Ascending aorta (tissue), 2 donors: ENCODE measurements at regions of chr5 and their contacts with region 1.

Region 1: GRCh38 chr5:173472141-173472543 is 143.9 kb upstream of the STC2 start:
- DNase-seq: peak; percentile 62 to 91
- H3K4me3 ChIP-seq: no peak overlapping the region
- H3K27ac ChIP-seq: peak overlapping the region; percentile 84 to 87
- H3K4me1 ChIP-seq: peaks cover 8 to 15% of the 10 kb centered on the region in 2 donors
- H3K27me3 ChIP-seq: no peaks in the 10 kb centered on the region
- CTCF ChIP-seq: no peak

Region 2: GRCh38 chr5:173315495-173316350 is 156.4 kb before region 1 on chr5:
- intact Hi-C with region 1: loop called (anchors 10 kb)
- DNase-seq: peak in 1 of 2 donors; percentile 70
- H3K4me3 ChIP-seq: peak overlapping the region in 1 of 2 donors; percentile 42
- H3K27ac ChIP-seq: no peak overlapping the region
- H3K4me1 ChIP-seq: peaks cover 4 to 10% of the 10 kb centered on the region in 2 donors
- H3K27me3 ChIP-seq: no peaks in the 10 kb centered on the region
- CTCF ChIP-seq: no peak

Region 3: DNA sequence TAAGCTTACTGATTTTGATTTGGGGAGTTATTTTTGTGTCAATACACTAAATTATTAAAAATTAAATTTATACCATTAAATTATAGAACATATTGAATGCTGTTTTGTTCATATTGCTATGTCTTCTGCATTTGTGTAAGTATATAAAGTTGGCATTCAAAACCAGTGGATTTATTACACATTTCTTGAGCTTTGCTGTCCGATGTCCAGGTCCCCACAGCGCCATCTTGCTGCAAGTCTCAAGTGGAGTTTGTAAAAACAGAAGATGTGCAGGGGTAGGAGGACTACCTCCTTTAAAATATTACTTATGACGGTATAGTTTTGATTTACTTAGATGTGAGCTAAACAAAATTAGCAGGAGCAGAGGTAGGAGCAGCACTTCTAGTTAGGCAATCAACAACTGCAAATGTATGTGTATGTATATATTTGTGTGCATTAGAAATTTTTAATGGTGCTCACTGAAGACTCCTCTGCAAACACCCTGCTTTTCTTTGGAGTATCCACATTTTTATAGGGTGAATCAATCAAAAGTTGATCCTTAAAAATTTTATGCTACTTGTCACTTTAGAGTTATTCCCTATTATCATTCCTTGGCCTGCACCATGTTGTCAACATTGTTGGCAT is 453.4 kb after region 1 on chr5:
- intact Hi-C with region 1: loop called (anchors 10 kb)
- DNase-seq: no peak
- H3K4me3 ChIP-seq: no peak overlapping the region
- H3K27ac ChIP-seq: peak overlapping the region; percentile 71 to 81
- H3K4me1 ChIP-seq: peaks cover 11 to 59% of the 10 kb centered on the region in 2 donors
- H3K27me3 ChIP-seq: no peaks in the 10 kb centered on the region
- CTCF ChIP-seq: peak in 2 of 3 experiments; percentile 19 to 29